Heart left ventricle (tissue), 16 donors: ENCODE measurements at regions of chr3 and their contacts with region 1.

Region 1: GRCh38 chr3:45011756-45012508 is 14.2 kb upstream of the CLEC3B start:
- DNase-seq: peak; percentile 66 to 89 (median 79)
- ATAC-seq: peak; percentile 88 to 90 (median 88)
- H3K4me3 ChIP-seq: peak overlapping the region in 2 of 12 donors; percentile 11 to 19
- H3K27ac ChIP-seq: peak overlapping the region; percentile 80 to 97 (median 87)
- H3K4me1 ChIP-seq: peaks cover 17 to 83% (median 35%) of the 10 kb centered on the region in 12 donors
- H3K27me3 ChIP-seq: no peaks in the 10 kb centered on the region
- CTCF ChIP-seq: no peak
- POLR2A ChIP-seq: no peak

Region 2: GRCh38 chr3:44976002-44976815 is 35.7 kb before region 1 on chr3 and contains the starts of genes EXOSC7 and ZDHHC3:
- intact Hi-C with region 1: loop called in 1 of 10 experiments (anchors 1 kb)
- DNase-seq: peak; percentile 90 to 94 (median 91)
- ATAC-seq: peak; percentile 87 to 93 (median 92)
- H3K4me3 ChIP-seq: peak within 1 kb of the TSS; percentile 42 to 99 (median 84)
- H3K27ac ChIP-seq: peak within 1 kb of the TSS; percentile 56 to 94 (median 90)
- H3K4me1 ChIP-seq: peaks cover 2 to 57% (median 26%) of the 10 kb centered on the region in 12 donors
- H3K27me3 ChIP-seq: no peaks in the 10 kb centered on the region
- CTCF ChIP-seq: peak in 1 of 12 donors; percentile 7
- POLR2A ChIP-seq: peak in 1 of 2 donors; percentile 72
- total RNA-seq, gene EXOSC7: 23.8 to 87.3 (median 30.7) TPM
- total RNA-seq, gene ZDHHC3: 40.5 to 94.7 (median 52.7) TPM

Region 3: GRCh38 chr3:45026957-45027356 is 15.0 kb after region 1 on chr3:
- intact Hi-C with region 1: loop called in 1 of 10 experiments (anchors 2 kb)
- DNase-seq: peak; percentile 84 to 94 (median 86)
- ATAC-seq: peak; percentile 71 to 85 (median 74)
- H3K4me3 ChIP-seq: peak overlapping the region in 11 of 12 donors; percentile 40 to 69 (median 51)
- H3K27ac ChIP-seq: peak overlapping the region; percentile 58 to 93 (median 76)
- H3K4me1 ChIP-seq: peaks cover 0 to 71% (median 48%) of the 10 kb centered on the region in 12 donors
- H3K27me3 ChIP-seq: no peaks in the 10 kb centered on the region
- CTCF ChIP-seq: no peak
- POLR2A ChIP-seq: peak in 1 of 2 donors; percentile 43

Region 4: GRCh38 chr3:45078910-45079522 is 67.1 kb after region 1 on chr3:
- intact Hi-C with region 1: no loop called
- DNase-seq: no peak
- ATAC-seq: peak in 1 of 4 donors; percentile 34
- H3K4me3 ChIP-seq: no peak overlapping the region
- H3K27ac ChIP-seq: no peak overlapping the region
- H3K4me1 ChIP-seq: peaks cover 0 to 15% (median 0%) of the 10 kb centered on the region in 12 donors
- H3K27me3 ChIP-seq: no peaks in the 10 kb centered on the region
- CTCF ChIP-seq: no peak
- POLR2A ChIP-seq: no peak